ENCODE measurements at regions of chr11 and their contacts with region 1.

Region 1: GRCh38 chr11:6315811-6316425 is 4.4 kb downstream of the CAVIN3 start:
- DNase-seq: no peak
- ATAC-seq: peak; percentile 86
- H3K4me3 ChIP-seq: no peak overlapping the region
- H3K27ac ChIP-seq: no peak overlapping the region
- H3K4me1 ChIP-seq: peaks cover 15% of the 10 kb centered on the region
- H3K27me3 ChIP-seq: no peaks in the 10 kb centered on the region; a peak in 1 of 4 replicates
- CTCF ChIP-seq: peak; percentile 78 to 88 (median 85)
- EP300 ChIP-seq: no peak
- POLR2A ChIP-seq: no peak
- RAD21 ChIP-seq: peak; percentile 83

Region 2: GRCh38 chr11:5891216-5891800 is 424.6 kb before region 1 on chr11:
- CTCF ChIA-PET with region 1: no interaction called
- POLR2A ChIA-PET with region 1: no interaction called
- RAD21 ChIA-PET with region 1: no interaction called
- SMC1A ChIA-PET with region 1: no interaction called
- in situ Hi-C with region 1: no loop called
- intact Hi-C with region 1: loop called (anchors 10 kb)
- DNase-seq: peak; percentile 0
- ATAC-seq: no peak; the same call in 2 of the 3 replicates
- H3K4me3 ChIP-seq: no peak overlapping the region
- H3K27ac ChIP-seq: no peak overlapping the region
- H3K4me1 ChIP-seq: no peaks in the 10 kb centered on the region
- H3K27me3 ChIP-seq: no peaks in the 10 kb centered on the region
- CTCF ChIP-seq: peak; percentile 8 to 38 (median 22); a peak in 4 of 6 replicates
- EP300 ChIP-seq: no peak
- POLR2A ChIP-seq: no peak
- RAD21 ChIP-seq: peak; percentile 53

Region 3: DNA sequence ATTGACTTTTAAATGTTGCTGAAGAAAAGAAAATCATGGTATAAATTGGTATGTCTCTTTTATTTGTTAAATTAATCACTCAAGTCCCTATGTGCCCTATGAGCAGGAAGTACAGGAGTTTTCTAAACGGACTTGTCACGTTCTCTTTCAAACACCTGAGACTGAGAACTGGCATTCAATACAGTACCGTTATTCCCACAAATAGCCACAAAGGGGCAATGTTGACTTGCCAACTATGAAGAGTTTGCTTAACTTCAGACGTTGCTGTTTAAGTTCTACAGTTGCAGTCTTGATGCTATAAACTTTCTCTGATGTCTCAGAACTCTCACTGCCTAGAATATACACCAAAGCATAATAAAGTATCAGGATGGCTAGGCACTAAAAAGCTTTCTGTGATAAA is 293.0 kb before region 1 on chr11:
- CTCF ChIA-PET with region 1: interaction called, 10 read pairs
- POLR2A ChIA-PET with region 1: no interaction called
- RAD21 ChIA-PET with region 1: no interaction called
- SMC1A ChIA-PET with region 1: interaction called, 6 read pairs
- in situ Hi-C with region 1: no loop called
- intact Hi-C with region 1: loop called (anchors 2 kb)
- DNase-seq: peak; percentile 5
- ATAC-seq: peak; percentile 76
- H3K4me3 ChIP-seq: no peak overlapping the region
- H3K27ac ChIP-seq: no peak overlapping the region
- H3K4me1 ChIP-seq: no peaks in the 10 kb centered on the region
- H3K27me3 ChIP-seq: no peaks in the 10 kb centered on the region
- CTCF ChIP-seq: peak; percentile 49 to 59 (median 53); a peak in 5 of 6 replicates
- EP300 ChIP-seq: no peak
- POLR2A ChIP-seq: no peak
- RAD21 ChIP-seq: peak; percentile 75

Region 4: GRCh38 chr11:6251120-6251733 is 64.7 kb before region 1 on chr11:
- CTCF ChIA-PET with region 1: interaction called, 55 read pairs
- POLR2A ChIA-PET with region 1: interaction called, 3 read pairs
- RAD21 ChIA-PET with region 1: no interaction called
- SMC1A ChIA-PET with region 1: interaction called, 26 read pairs
- in situ Hi-C with region 1: no loop called
- intact Hi-C with region 1: loop called (anchors 1 kb)
- DNase-seq: no peak
- ATAC-seq: peak; percentile 91
- H3K4me3 ChIP-seq: no peak overlapping the region
- H3K27ac ChIP-seq: no peak overlapping the region
- H3K4me1 ChIP-seq: no peaks in the 10 kb centered on the region
- H3K27me3 ChIP-seq: 0 out of 4 replicates have a peak, but pooled peaks cover 0 to 3% of the 10 kb centered on the region in 2 experiments
- CTCF ChIP-seq: peak; percentile 68 to 86 (median 75)
- EP300 ChIP-seq: no peak
- POLR2A ChIP-seq: no peak
- RAD21 ChIP-seq: peak; percentile 56

Region 5: GRCh38 chr11:6298605-6299004 is 17.3 kb before region 1 on chr11:
- CTCF ChIA-PET with region 1: interaction called, 15 read pairs
- POLR2A ChIA-PET with region 1: no interaction called
- RAD21 ChIA-PET with region 1: interaction called, 4 read pairs
- SMC1A ChIA-PET with region 1: interaction called, 9 read pairs
- in situ Hi-C with region 1: no loop called
- intact Hi-C with region 1: loop called (anchors 1 kb)
- DNase-seq: no peak
- ATAC-seq: peak; percentile 96
- H3K4me3 ChIP-seq: no peak overlapping the region
- H3K27ac ChIP-seq: no peak overlapping the region
- H3K4me1 ChIP-seq: no peaks in the 10 kb centered on the region
- H3K27me3 ChIP-seq: no peaks in the 10 kb centered on the region
- CTCF ChIP-seq: peak; percentile 49 to 75 (median 67); a peak in 5 of 6 replicates
- EP300 ChIP-seq: no peak
- POLR2A ChIP-seq: no peak
- RAD21 ChIP-seq: peak; percentile 28; the same call in 1 of the 2 replicates